ENCODE measurements at regions of chr3 and their contacts with region 1.

Region 1: GRCh38 chr3:128879125-128879969 is at the start of gene ACAD9:
- DNase-seq: peak; percentile 99
- ATAC-seq: peak; percentile 94
- H3K4me3 Mint-ChIP-seq: peak within 1 kb of the TSS; percentile 88
- H3K27ac Mint-ChIP-seq: peak within 1 kb of the TSS; percentile 92
- H3K4me1 Mint-ChIP-seq: peaks cover 52% of the 10 kb centered on the region
- H3K27me3 Mint-ChIP-seq: no peaks in the 10 kb centered on the region
- CTCF ChIP-seq: no peak
- total RNA-seq, gene ACAD9: 52.5 and 57.3 TPM in 2 replicates

Region 2: GRCh38 chr3:128650096-128651050 is 229.0 kb before region 1 on chr3 and contains the start of gene RPN1:
- CTCF ChIA-PET with region 1: interaction called, 3 read pairs
- POLR2A ChIA-PET with region 1: interaction called, 19 read pairs
- intact Hi-C with region 1: loop called (anchors 1 kb)
- DNase-seq: peak; percentile 90
- ATAC-seq: peak; percentile 97
- H3K4me3 Mint-ChIP-seq: peak within 1 kb of the TSS; percentile 89
- H3K27ac Mint-ChIP-seq: peak within 1 kb of the TSS; percentile 86
- H3K4me1 Mint-ChIP-seq: peaks cover 41% of the 10 kb centered on the region
- H3K27me3 Mint-ChIP-seq: no peaks in the 10 kb centered on the region
- CTCF ChIP-seq: no peak
- total RNA-seq, gene RPN1: 93.4 and 95.2 TPM in 2 replicates

Region 3: GRCh38 chr3:128725932-128726690 is 153.2 kb before region 1 on chr3 and contains the start of gene RAB7A:
- CTCF ChIA-PET with region 1: no interaction called
- POLR2A ChIA-PET with region 1: interaction called, 4 read pairs
- intact Hi-C with region 1: loop called (anchors 1 kb)
- DNase-seq: peak; percentile 93
- ATAC-seq: peak; percentile 94
- H3K4me3 Mint-ChIP-seq: peak within 1 kb of the TSS; percentile 93
- H3K27ac Mint-ChIP-seq: peak within 1 kb of the TSS; percentile 91
- H3K4me1 Mint-ChIP-seq: peaks cover 61% of the 10 kb centered on the region
- H3K27me3 Mint-ChIP-seq: peaks cover 7% of the 10 kb centered on the region
- CTCF ChIP-seq: no peak
- total RNA-seq, gene RAB7A: 169 and 190 TPM in 2 replicates

Region 4: GRCh38 chr3:128845778-128846485 is 33.4 kb before region 1 on chr3:
- CTCF ChIA-PET with region 1: no interaction called
- POLR2A ChIA-PET with region 1: interaction called, 5 read pairs
- intact Hi-C with region 1: loop called (anchors 2 kb)
- DNase-seq: peak; percentile 72
- ATAC-seq: peak; percentile 87
- H3K4me3 Mint-ChIP-seq: peak overlapping the region; percentile 88
- H3K27ac Mint-ChIP-seq: peak overlapping the region; percentile 36
- H3K4me1 Mint-ChIP-seq: peaks cover 10% of the 10 kb centered on the region
- H3K27me3 Mint-ChIP-seq: no peaks in the 10 kb centered on the region
- CTCF ChIP-seq: no peak

Region 5: DNA sequence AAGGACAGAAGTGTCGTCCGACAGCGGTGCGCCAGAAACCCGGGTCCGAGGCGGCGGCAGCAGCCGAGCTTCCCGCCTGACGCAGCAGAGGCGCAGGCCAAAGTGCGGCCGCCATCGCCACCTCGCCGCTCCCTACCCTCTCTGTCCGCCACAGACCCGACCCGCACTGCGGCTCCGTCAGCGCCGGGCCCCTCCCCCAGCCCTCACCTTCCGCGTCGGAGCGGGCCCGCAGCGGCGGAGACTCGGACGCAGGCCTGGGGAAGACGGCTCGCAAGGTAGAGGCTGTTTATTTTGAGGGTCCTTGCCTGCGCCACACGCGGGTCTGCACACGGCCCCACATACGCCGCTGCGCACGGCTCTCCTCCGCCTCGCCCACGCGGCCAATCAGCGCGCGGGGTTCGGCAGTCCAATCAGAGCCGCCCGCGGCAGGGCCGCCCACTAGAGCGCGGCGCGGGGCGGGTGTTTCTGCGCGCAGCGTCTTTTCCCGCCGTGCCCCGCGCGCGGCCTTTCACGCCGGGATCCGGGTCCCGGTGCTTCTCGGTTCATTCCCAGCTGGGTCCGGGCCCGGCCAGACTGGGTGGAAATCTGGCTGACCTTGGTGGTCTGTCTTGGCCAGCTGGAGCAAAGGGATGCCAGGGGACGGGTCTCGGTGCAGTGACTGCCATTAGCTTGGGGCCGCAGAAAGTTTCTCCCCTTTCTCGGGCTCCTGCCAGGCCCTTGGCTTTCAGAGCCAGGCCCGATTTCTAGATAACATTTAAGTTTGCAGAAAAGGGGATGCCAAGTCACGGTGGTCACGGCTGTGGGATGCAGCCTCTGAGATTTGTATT is 304.4 kb after region 1 on chr3 and contains the start of gene CNBP:
- CTCF ChIA-PET with region 1: no interaction called
- POLR2A ChIA-PET with region 1: interaction called, 4 read pairs
- intact Hi-C with region 1: loop called (anchors 10 kb)
- DNase-seq: peak; percentile 92
- ATAC-seq: peak; percentile 95
- H3K4me3 Mint-ChIP-seq: peak within 1 kb of the TSS; percentile 95
- H3K27ac Mint-ChIP-seq: peak within 1 kb of the TSS; percentile 95
- H3K4me1 Mint-ChIP-seq: peaks cover 50% of the 10 kb centered on the region
- H3K27me3 Mint-ChIP-seq: no peaks in the 10 kb centered on the region
- CTCF ChIP-seq: no peak
- total RNA-seq, gene CNBP: 281 and 303 TPM in 2 replicates

Region 6: DNA sequence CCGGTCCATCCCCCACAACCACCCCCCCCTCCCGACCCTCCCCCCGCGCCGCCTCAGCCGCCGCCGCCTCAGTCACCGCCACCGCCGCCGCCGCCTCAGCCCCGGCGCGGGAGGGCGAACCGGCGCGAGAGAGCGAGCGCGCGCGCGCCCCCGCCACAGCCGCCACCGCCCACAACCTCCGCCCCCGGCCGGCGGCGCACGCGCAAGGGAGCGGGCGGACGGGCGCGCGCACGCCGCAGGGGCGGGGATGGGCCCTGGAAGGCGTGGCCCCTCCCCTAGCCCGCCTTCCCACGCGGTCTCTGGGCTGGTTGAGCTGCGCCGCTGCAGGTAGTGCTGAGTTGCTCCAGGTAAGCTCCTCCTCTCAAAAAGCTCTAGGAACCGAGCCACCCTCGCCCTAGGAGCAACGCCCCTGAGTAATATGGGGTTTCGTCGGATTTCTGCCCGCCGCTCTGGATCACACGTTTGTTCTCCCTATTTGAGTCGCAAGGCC is 1014.3 kb after region 1 on chr3 and contains the start of gene TMCC1:
- CTCF ChIA-PET with region 1: no interaction called
- POLR2A ChIA-PET with region 1: no interaction called
- intact Hi-C with region 1: loop called (anchors 5 kb)
- DNase-seq: peak; percentile 92
- ATAC-seq: peak; percentile 90
- H3K4me3 Mint-ChIP-seq: peak within 1 kb of the TSS; percentile 87
- H3K27ac Mint-ChIP-seq: peak within 1 kb of the TSS; percentile 88
- H3K4me1 Mint-ChIP-seq: peaks cover 34% of the 10 kb centered on the region
- H3K27me3 Mint-ChIP-seq: no peaks in the 10 kb centered on the region
- CTCF ChIP-seq: no peak
- total RNA-seq, gene TMCC1: 25.8 and 25.9 TPM in 2 replicates

Measured in activated B cell treated with CpG ODN at 0.5 μM for 24 hours (primary cell).